CD14-positive monocyte (primary cell): ENCODE measurements at regions of chr1 and their contacts with region 1.

Region 1: GRCh38 chr1:155250633-155251449 is 4.4 kb downstream of the ENTREP3 start:
- DNase-seq: peak; percentile 92 to 94 (median 92)
- H3K4me3 ChIP-seq: peak overlapping the region; percentile 36 to 83 (median 60)
- H3K4me3 Mint-ChIP-seq: peak overlapping the region; percentile 66 to 73
- H3K27ac ChIP-seq: peak overlapping the region in 1 of 2 donors; percentile 73
- H3K27ac Mint-ChIP-seq: peak overlapping the region in 3 of 7 donors; percentile 3 to 50 (median 18)
- H3K4me1 ChIP-seq: peaks cover 26 to 35% of the 10 kb centered on the region in 2 donors
- H3K4me1 Mint-ChIP-seq: peaks cover 26% of the 10 kb centered on the region
- H3K27me3 ChIP-seq: no peaks in the 10 kb centered on the region
- H3K27me3 Mint-ChIP-seq: peaks cover 0 to 3% (median 1%) of the 10 kb centered on the region in 3 donors
- CTCF ChIP-seq: peak; percentile 100

Region 2: GRCh38 chr1:155323798-155324610 is 73.2 kb after region 1 on chr1:
- intact Hi-C with region 1: loop called (anchors 2 to 5 kb)
- DNase-seq: peak; percentile 90 to 94 (median 94)
- H3K4me3 ChIP-seq: peak overlapping the region; percentile 62 to 84 (median 80)
- H3K4me3 Mint-ChIP-seq: peak overlapping the region; percentile 83 to 90
- H3K27ac ChIP-seq: peak overlapping the region; percentile 71 to 91
- H3K27ac Mint-ChIP-seq: peak overlapping the region; percentile 74 to 96 (median 89)
- H3K4me1 ChIP-seq: peaks cover 31 to 56% of the 10 kb centered on the region in 2 donors
- H3K4me1 Mint-ChIP-seq: peaks cover 50% of the 10 kb centered on the region
- H3K27me3 ChIP-seq: no peaks in the 10 kb centered on the region
- H3K27me3 Mint-ChIP-seq: peaks cover 2 to 7% (median 2%) of the 10 kb centered on the region in 3 donors
- CTCF ChIP-seq: no peak

Region 3: GRCh38 chr1:155591770-155592169 is 340.9 kb after region 1 on chr1:
- intact Hi-C with region 1: loop called (anchors 5 kb)
- DNase-seq: peak; percentile 37 to 64 (median 46)
- H3K4me3 ChIP-seq: no peak overlapping the region
- H3K4me3 Mint-ChIP-seq: no peak overlapping the region
- H3K27ac ChIP-seq: no peak overlapping the region
- H3K27ac Mint-ChIP-seq: no peak overlapping the region
- H3K4me1 ChIP-seq: no peaks in the 10 kb centered on the region
- H3K4me1 Mint-ChIP-seq: peaks cover 3% of the 10 kb centered on the region
- H3K27me3 ChIP-seq: no peaks in the 10 kb centered on the region
- H3K27me3 Mint-ChIP-seq: peaks cover 0 to 2% (median 0%) of the 10 kb centered on the region in 3 donors
- CTCF ChIP-seq: peak; percentile 77